Gastrocnemius medialis (tissue), 4 donors: ENCODE measurements at regions of chr3 and their contacts with region 1.

Region 1: GRCh38 chr3:9396700-9397521 is 504 bp upstream of the SETD5 start:
- DNase-seq: peak; percentile 99
- ATAC-seq: peak; percentile 79
- H3K4me3 ChIP-seq: peak overlapping the region; percentile 70 to 94 (median 71)
- H3K27ac ChIP-seq: peak overlapping the region; percentile 97 to 100 (median 99)
- H3K4me1 ChIP-seq: peaks cover 54 to 73% of the 10 kb centered on the region in 2 donors
- H3K27me3 ChIP-seq: no peaks in the 10 kb centered on the region
- CTCF ChIP-seq: no peak
- POLR2A ChIP-seq: peak; percentile 92 to 97

Region 2: DNA sequence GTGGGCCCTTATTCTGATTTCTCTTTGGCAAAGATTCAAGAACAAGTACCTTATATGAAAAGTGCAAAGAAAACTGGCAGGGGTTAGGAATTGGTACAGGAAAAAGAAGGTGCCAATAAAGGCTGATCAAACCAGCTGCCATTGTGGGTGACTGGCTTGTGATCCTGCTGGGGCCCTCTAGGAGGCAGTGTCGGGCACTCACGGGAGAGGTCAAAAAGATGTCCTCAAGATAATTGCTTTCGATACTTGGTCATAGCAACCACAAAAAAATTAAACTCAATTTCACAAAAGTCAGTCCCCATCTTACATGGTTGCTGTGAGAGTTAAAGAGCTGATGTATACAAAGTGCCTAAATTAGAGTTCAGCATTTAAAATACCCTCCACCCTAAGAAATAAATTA is 694.4 kb before region 1 on chr3:
- in situ Hi-C with region 1: no loop called
- intact Hi-C with region 1: no loop called
- DNase-seq: no peak
- ATAC-seq: no peak
- H3K4me3 ChIP-seq: no peak overlapping the region
- H3K27ac ChIP-seq: no peak overlapping the region
- H3K4me1 ChIP-seq: no peaks in the 10 kb centered on the region
- H3K27me3 ChIP-seq: no peaks in the 10 kb centered on the region
- CTCF ChIP-seq: no peak
- POLR2A ChIP-seq: no peak

Region 3: DNA sequence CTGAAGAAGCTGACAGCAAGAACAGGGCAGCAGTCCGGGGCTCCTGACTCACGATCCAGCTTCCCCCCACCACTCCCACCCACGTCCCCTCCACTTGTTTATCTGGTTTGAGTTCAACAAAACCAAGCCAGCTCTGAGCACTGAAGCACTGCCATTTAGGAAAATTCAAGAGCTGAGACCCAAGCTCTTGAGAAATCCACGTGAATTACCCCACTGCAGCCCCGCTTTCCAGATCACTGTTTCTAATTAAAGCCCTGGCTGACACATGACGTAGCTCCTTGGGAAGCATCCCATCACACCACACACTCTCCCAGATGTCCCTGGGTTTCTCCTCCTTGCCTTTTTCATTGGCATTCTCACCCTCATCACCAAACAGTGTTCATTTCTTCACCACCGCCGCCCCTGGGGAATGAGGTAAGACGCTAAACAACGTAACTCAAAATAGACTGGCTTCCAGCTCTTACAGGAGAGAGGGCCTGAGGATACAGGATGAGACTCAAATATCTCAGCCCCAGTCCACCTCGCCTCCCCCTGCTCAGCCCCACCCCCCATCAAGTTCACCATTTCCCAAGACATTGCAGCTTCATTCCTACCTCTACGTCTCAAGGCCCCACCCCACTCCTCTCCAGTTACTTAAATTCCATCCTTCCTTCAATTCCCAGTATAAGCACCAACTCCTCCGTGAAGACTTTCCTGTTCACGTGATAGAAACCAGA is 242.8 kb before region 1 on chr3:
- in situ Hi-C with region 1: no loop called
- intact Hi-C with region 1: loop called (anchors 10 kb)
- DNase-seq: peak; percentile 73 to 92
- ATAC-seq: peak; percentile 81 to 84
- H3K4me3 ChIP-seq: peak overlapping the region; percentile 12 to 42 (median 28)
- H3K27ac ChIP-seq: peak overlapping the region; percentile 81 to 87 (median 82)
- H3K4me1 ChIP-seq: peaks cover 21 to 29% of the 10 kb centered on the region in 2 donors
- H3K27me3 ChIP-seq: no peaks in the 10 kb centered on the region
- CTCF ChIP-seq: no peak
- POLR2A ChIP-seq: peak in 1 of 2 donors; percentile 8

Region 4: GRCh38 chr3:9362731-9363530 is 34.0 kb before region 1 on chr3 and contains the start of gene THUMPD3:
- in situ Hi-C with region 1: no loop called
- intact Hi-C with region 1: loop called (anchors 2 kb)
- DNase-seq: peak; percentile 81 to 86
- ATAC-seq: peak; percentile 95 to 97
- H3K4me3 ChIP-seq: peak within 1 kb of the TSS; percentile 70 to 96 (median 79)
- H3K27ac ChIP-seq: peak within 1 kb of the TSS; percentile 85 to 97 (median 89)
- H3K4me1 ChIP-seq: peaks cover 20 to 21% of the 10 kb centered on the region in 2 donors
- H3K27me3 ChIP-seq: no peaks in the 10 kb centered on the region
- CTCF ChIP-seq: peak in 1 of 5 experiments; percentile 24
- POLR2A ChIP-seq: peak; percentile 66 to 85
- total RNA-seq, gene THUMPD3: 22.2 to 39.8 (median 25.2) TPM

Region 5: DNA sequence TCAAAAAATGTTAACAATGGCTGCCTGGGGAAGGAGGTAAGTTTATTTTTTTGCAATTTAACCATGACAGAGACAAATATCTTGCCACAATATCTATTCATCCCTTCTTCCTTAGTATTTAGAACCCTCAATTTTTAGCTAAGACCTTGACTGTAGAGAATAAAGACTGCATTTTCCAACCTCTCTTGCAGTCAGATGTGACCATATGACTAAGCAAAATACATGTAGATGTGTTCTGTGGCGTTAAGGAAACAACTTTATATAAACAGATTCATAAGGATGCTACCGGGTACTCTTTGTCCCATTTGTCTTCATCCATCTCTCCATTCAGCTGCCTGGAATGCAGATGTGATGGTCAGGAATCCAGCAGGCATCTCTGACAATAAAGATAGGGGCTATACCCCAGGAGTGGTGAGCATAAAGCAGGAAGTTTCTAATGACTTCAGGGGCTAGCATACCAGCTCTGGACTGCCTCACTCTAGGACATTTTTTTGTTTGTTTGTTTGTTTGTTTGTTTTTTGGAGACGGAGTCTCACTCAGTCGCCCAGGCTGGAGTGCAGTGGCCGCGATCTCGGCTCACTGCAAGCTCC is 115.6 kb after region 1 on chr3:
- in situ Hi-C with region 1: no loop called
- intact Hi-C with region 1: no loop called
- DNase-seq: no peak
- ATAC-seq: no peak
- H3K4me3 ChIP-seq: no peak overlapping the region
- H3K27ac ChIP-seq: no peak overlapping the region
- H3K4me1 ChIP-seq: no peaks in the 10 kb centered on the region
- H3K27me3 ChIP-seq: peaks cover 20 to 28% (median 23%) of the 10 kb centered on the region in 3 donors
- CTCF ChIP-seq: no peak
- POLR2A ChIP-seq: no peak

Region 6: GRCh38 chr3:9649791-9650521 is 253.0 kb after region 1 on chr3:
- in situ Hi-C with region 1: no loop called
- intact Hi-C with region 1: loop called (anchors 5 kb)
- DNase-seq: no peak
- ATAC-seq: peak; percentile 3
- H3K4me3 ChIP-seq: peak overlapping the region; percentile 89 to 98 (median 93)
- H3K27ac ChIP-seq: peak overlapping the region; percentile 89 to 96 (median 96)
- H3K4me1 ChIP-seq: peaks cover 40 to 41% of the 10 kb centered on the region in 2 donors
- H3K27me3 ChIP-seq: no peaks in the 10 kb centered on the region
- CTCF ChIP-seq: no peak
- POLR2A ChIP-seq: no peak

Region 7: GRCh38 chr3:9976721-9977709 is 580.1 kb after region 1 on chr3:
- in situ Hi-C with region 1: no loop called
- intact Hi-C with region 1: loop called (anchors 2 kb)
- DNase-seq: peak; percentile 83 to 93
- ATAC-seq: peak; percentile 98 to 99
- H3K4me3 ChIP-seq: peak overlapping the region; percentile 23 to 56 (median 50)
- H3K27ac ChIP-seq: peak overlapping the region; percentile 89 to 96 (median 90)
- H3K4me1 ChIP-seq: peaks cover 36 to 54% of the 10 kb centered on the region in 2 donors
- H3K27me3 ChIP-seq: no peaks in the 10 kb centered on the region
- CTCF ChIP-seq: no peak
- POLR2A ChIP-seq: peak; percentile 36 to 37

Region 8: DNA sequence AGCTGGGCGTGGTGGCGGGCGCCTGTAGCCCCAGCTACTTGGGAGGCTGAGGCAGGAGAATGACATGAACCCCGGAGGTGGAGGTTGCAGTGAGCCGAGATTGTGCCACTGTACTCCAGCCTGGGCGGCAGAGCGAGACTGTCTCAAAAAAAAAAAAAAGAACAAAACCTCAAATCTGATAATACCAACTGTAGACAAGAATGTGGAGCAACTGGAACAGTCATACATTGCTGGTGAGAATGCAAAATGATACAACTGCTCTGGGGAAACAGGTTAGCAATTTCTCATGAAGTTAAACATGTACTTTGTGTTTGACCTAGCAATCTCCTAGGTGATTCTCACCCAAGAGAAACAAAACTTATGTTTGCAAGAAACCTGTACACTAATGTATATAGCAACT is 740.2 kb after region 1 on chr3:
- in situ Hi-C with region 1: no loop called
- intact Hi-C with region 1: no loop called
- DNase-seq: no peak
- ATAC-seq: no peak
- H3K4me3 ChIP-seq: no peak overlapping the region
- H3K27ac ChIP-seq: no peak overlapping the region
- H3K4me1 ChIP-seq: no peaks in the 10 kb centered on the region
- H3K27me3 ChIP-seq: no peaks in the 10 kb centered on the region
- CTCF ChIP-seq: no peak
- POLR2A ChIP-seq: no peak